GM12878 (cell line): ENCODE measurements at regions of chr1 and their contacts with region 1.

Region 1: DNA sequence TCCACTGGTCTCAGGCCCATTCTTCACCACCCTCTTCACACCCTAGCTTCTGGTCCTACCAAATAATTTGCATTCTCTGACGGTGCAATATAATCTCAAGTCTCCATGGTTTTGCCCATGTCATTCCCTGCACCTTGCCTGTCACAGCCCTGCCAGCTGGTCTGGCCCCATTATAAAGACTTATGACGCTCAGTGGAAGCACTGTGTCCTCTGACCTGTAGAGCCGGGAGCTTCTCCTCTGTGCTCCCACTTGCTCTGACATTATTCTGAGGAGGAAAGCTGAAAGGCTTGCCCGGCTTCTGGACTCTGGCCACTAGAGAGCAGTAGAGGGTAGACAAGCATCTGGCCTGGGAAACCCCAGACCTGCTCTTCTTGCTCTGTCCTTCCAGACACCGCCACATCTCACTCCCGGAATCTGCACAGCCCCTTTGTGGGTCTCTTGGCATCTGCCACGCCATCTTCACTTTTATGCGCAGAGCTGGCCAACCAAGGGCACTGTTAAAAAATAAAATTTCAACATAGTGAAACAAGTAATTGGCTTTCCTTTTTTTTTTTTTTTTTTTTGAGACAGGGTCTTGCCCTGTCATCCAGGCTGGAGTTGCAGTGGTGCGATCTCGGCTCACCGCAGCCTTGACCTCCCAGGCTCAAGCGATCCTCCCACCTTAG is 44.4 kb downstream of the NENF start:
- DNase-seq: peak; percentile 65
- ATAC-seq: peak; percentile 97
- H3K4me3 ChIP-seq: no peak overlapping the region
- H3K27ac ChIP-seq: no peak overlapping the region; the same call in 1 of the 2 replicates
- H3K4me1 ChIP-seq: peaks cover 6% of the 10 kb centered on the region; the same call in 1 of the 2 replicates
- H3K27me3 ChIP-seq: no peaks in the 10 kb centered on the region
- CTCF ChIP-seq: peak; percentile 94 to 97 (median 96)
- EP300 ChIP-seq: no peak
- POLR2A ChIP-seq: no peak
- RAD21 ChIP-seq: peak; percentile 90

Region 2: DNA sequence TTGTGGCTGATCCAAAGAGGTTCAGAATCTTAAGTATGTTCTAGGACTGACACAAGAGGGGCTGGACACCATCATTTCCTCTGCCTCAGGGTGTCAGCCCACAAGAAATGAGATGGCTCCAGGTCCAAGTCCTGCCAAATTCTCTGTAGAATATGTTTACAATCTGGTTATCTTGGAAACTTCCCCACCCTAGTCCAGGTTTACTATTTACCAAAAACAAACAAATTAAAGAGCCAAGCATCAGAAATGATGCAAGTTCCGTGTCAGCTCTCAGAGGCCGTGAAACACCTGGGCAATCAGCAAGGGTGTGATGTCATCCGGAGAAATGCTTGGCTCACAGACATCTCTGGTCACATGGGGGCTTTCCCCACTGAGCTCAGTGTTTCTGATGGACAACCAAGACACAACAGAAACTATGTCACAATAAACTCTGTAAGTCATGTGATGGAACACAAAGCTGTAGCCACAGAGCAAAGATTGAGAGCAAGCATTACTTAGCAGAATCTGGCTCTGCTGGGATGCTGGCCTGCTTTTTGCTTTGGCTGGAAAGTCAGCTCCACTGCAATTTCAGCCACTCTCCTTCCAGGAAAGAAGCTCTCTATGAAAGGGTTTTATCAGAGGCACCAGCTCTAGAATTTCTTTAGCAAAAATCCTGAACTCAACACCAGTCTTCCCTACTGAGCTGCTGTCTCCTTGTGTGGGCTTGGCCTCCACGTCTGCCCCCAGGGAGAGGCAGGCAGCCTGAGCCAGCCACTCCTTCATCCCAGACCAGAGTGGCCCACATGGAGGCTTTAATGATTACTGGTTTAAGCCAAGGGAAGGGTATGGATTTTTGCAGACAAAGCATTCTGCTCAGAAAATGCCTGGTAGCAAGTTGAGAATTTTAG is 11.5 kb after region 1 on chr1:
- CTCF ChIA-PET with region 1: interaction called, 29 read pairs
- POLR2A ChIA-PET with region 1: interaction called, 6 read pairs
- RAD21 ChIA-PET with region 1: interaction called, 22 read pairs
- SMC1A ChIA-PET with region 1: interaction called, 42 read pairs
- in situ Hi-C with region 1: no loop called
- intact Hi-C with region 1: no loop called
- DNase-seq: no peak
- ATAC-seq: peak; percentile 84
- H3K4me3 ChIP-seq: no peak overlapping the region
- H3K27ac ChIP-seq: no peak overlapping the region
- H3K4me1 ChIP-seq: no peaks in the 10 kb centered on the region
- H3K27me3 ChIP-seq: no peaks in the 10 kb centered on the region
- CTCF ChIP-seq: no peak
- EP300 ChIP-seq: peak in 1 of 2 experiments; percentile 63; a peak in 1 of 4 replicates
- POLR2A ChIP-seq: no peak
- RAD21 ChIP-seq: no peak

Region 3: DNA sequence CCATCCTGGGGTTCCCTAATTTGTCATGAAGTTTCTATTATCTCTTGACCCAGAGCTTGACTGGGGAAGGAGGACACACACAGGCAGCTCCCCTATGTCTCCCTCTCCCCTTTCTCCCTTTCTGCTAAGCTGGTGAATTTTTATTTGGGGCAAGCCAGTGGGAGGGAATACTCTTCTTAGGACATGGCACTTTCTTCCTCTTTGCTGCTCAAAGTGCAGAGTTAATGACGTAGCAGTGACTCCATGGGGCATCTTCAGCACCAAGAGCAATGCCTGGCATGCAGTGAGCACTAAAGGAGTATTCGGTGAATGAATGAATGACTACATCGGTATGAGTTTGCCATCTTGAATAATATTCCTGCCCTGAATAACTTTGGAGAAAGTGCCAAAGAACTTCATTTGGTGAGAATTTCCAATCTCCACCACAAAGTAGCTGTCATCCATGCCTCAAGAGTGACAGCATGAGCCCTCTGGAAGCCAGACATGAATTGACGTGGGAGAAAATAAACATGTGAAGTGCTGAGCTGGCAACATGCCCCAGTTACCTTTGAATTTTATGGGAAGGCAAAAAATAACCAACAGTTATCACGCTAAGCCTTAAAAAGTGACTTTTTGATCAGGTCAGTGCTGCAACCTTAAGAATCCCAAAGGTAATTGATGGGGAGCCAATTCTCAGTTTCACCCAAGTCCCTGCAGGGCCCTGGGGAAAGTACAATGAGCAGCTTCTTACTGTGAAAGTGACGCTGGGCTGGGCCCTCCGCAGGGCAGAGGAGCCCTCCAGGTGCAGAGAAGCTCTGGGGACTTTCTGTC is 109.3 kb after region 1 on chr1:
- CTCF ChIA-PET with region 1: interaction called, 30 read pairs
- POLR2A ChIA-PET with region 1: interaction called, 3 read pairs
- RAD21 ChIA-PET with region 1: interaction called, 18 read pairs
- SMC1A ChIA-PET with region 1: interaction called, 12 read pairs
- in situ Hi-C with region 1: no loop called
- intact Hi-C with region 1: no loop called
- DNase-seq: peak; percentile 58
- ATAC-seq: peak; percentile 97
- H3K4me3 ChIP-seq: no peak overlapping the region
- H3K27ac ChIP-seq: peak overlapping the region; percentile 45
- H3K4me1 ChIP-seq: peaks cover 15% of the 10 kb centered on the region
- H3K27me3 ChIP-seq: no peaks in the 10 kb centered on the region
- CTCF ChIP-seq: no peak
- EP300 ChIP-seq: peak; percentile 80 to 83; a peak in 2 of 4 replicates
- POLR2A ChIP-seq: no peak
- RAD21 ChIP-seq: peak; percentile 31; the same call in 1 of the 2 replicates

Region 4: DNA sequence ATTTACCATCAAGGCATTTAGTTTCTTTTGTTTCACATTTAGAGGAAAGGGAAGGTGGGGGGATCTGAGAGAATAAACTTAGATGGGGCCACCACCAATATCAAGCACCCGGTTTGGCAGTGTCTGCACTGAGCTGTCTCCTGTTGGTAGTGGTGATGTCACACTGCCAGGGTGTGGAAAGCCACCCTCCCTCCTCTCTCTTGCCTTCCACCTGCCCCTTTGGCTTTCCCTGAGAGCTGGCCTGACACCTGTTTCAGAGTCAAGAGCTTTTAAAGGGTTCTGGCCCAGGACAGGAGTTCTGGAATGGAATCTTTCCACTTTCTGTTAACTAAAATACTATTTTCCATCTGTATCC is 144.8 kb after region 1 on chr1:
- CTCF ChIA-PET with region 1: interaction called, 5 read pairs
- POLR2A ChIA-PET with region 1: interaction called, 11 read pairs
- RAD21 ChIA-PET with region 1: interaction called, 8 read pairs
- SMC1A ChIA-PET with region 1: interaction called, 8 read pairs
- in situ Hi-C with region 1: no loop called
- intact Hi-C with region 1: no loop called
- DNase-seq: no peak
- ATAC-seq: peak; percentile 49
- H3K4me3 ChIP-seq: no peak overlapping the region
- H3K27ac ChIP-seq: no peak overlapping the region
- H3K4me1 ChIP-seq: no peaks in the 10 kb centered on the region
- H3K27me3 ChIP-seq: no peaks in the 10 kb centered on the region
- CTCF ChIP-seq: no peak
- EP300 ChIP-seq: no peak
- POLR2A ChIP-seq: 0 out of 2 replicates have a peak, but pooled peaks have one; percentile 27
- RAD21 ChIP-seq: no peak

Region 5: GRCh38 chr1:212671342-212672031 is 194.3 kb after region 1 on chr1:
- CTCF ChIA-PET with region 1: interaction called, 40 read pairs
- POLR2A ChIA-PET with region 1: no interaction called
- RAD21 ChIA-PET with region 1: interaction called, 21 read pairs
- SMC1A ChIA-PET with region 1: interaction called, 26 read pairs
- in situ Hi-C with region 1: no loop called
- intact Hi-C with region 1: no loop called
- DNase-seq: no peak
- ATAC-seq: peak; percentile 65
- H3K4me3 ChIP-seq: no peak overlapping the region
- H3K27ac ChIP-seq: no peak overlapping the region
- H3K4me1 ChIP-seq: peaks cover 34% of the 10 kb centered on the region
- H3K27me3 ChIP-seq: no peaks in the 10 kb centered on the region
- CTCF ChIP-seq: no peak
- EP300 ChIP-seq: no peak
- POLR2A ChIP-seq: no peak
- RAD21 ChIP-seq: no peak

Region 6: DNA sequence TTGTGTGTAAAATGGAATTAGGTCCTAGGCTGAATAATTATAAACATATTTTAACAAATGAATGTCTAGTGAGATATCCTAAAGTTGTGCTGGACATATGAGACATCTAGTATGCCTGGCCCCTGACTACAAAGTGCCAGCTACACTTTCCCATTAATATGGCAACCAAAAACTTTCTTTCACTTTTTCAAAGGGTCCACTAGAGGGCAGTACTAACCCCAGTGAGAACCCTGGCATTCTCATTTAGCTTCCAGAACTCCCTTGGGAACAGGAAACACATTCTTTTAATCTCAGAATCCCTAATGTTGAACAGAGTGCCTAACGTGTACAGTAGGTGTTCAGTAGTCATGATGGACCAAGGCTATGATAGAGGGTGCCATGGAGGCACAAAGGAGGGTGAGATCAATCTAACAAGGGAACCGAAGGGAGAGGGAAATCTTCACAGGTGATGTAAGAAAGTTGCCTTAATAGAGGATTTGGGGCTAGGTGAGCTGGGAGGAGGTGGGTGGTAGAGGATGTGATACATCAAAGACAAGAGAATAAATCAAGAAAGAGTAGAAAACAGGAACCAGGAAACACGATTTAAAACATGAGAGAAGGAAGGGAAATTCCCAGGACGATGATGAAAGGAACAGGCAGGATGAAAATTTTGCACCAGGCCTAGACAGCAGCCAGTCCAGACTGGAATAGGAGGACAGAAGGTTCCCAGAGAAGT is 272.8 kb after region 1 on chr1:
- CTCF ChIA-PET with region 1: interaction called, 30 read pairs
- POLR2A ChIA-PET with region 1: interaction called, 5 read pairs
- RAD21 ChIA-PET with region 1: interaction called, 9 read pairs
- SMC1A ChIA-PET with region 1: interaction called, 32 read pairs
- in situ Hi-C with region 1: no loop called
- intact Hi-C with region 1: loop called (anchors 10 kb)
- DNase-seq: peak; percentile 51
- ATAC-seq: peak; percentile 65
- H3K4me3 ChIP-seq: peak overlapping the region; percentile 32; the same call in 1 of the 2 replicates
- H3K27ac ChIP-seq: peak overlapping the region; percentile 59
- H3K4me1 ChIP-seq: peaks cover 41% of the 10 kb centered on the region
- H3K27me3 ChIP-seq: no peaks in the 10 kb centered on the region
- CTCF ChIP-seq: peak; percentile 52 to 69 (median 53); a peak in 5 of 6 replicates
- EP300 ChIP-seq: no peak; a peak in 1 of 4 replicates
- POLR2A ChIP-seq: no peak
- RAD21 ChIP-seq: peak; percentile 47